Activated CD4-positive, alpha-beta T cell treated with anti-CD3 and anti-CD28 coated beads, Interleukin-2, amount 10 ng/mL, durations not matched to agents 24 days and 14 days (primary cell): ENCODE measurements at regions of chr3 and their contacts with region 1.

Region 1: DNA sequence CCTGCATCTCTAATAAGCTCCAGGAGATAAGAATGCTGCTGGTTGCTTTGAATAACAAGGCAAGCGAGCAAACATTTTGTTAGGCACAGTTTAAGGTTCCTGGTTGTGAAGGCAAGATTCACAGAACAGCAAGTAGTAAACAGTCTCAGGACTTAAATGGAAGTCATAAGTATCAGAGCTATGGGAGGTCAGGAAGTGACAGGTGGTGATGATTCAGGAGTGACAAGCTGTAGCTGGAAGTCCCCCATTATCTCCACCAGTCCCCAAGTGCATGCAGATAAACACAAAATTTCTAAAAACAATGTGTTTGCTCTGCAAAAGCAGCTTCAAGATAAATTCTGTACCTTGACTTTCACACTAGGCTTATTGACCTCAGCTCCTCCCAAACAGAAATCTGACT is 3.3 kb downstream of the FETUB start:
- DNase-seq: peak; percentile 70
- H3K4me3 Mint-ChIP-seq: peak overlapping the region; percentile 8
- H3K27ac Mint-ChIP-seq: peak overlapping the region; percentile 63
- H3K4me1 Mint-ChIP-seq: peaks cover 33% of the 10 kb centered on the region
- H3K27me3 Mint-ChIP-seq: no peaks in the 10 kb centered on the region

Region 2: DNA sequence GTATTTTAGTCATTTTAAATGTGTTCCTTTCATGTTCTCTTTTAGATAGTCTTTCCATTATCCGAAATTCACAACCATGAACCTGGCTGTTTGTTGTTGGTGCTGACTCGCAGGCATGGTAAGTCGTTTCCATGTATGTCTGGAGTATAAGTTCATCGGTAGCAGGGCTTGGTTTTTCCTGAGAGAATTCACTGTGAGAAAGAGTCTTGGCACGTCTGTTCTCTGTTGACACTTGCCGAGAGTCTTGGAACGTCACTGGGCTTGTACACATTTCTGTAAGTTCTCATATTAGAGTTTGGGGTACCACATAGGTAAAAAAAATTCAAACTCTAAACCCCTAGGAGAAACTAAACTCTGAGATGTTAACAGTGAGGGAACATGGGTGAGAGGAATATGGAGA is 110.5 kb after region 1 on chr3:
- intact Hi-C with region 1: loop called (anchors 1 kb)
- DNase-seq: no peak
- H3K4me3 Mint-ChIP-seq: no peak overlapping the region
- H3K27ac Mint-ChIP-seq: no peak overlapping the region
- H3K4me1 Mint-ChIP-seq: peaks cover 5% of the 10 kb centered on the region
- H3K27me3 Mint-ChIP-seq: peaks cover 3% of the 10 kb centered on the region